Posterior vena cava (tissue), 2 donors: ENCODE measurements at regions of chr1 and their contacts with region 1.

Region 1: DNA sequence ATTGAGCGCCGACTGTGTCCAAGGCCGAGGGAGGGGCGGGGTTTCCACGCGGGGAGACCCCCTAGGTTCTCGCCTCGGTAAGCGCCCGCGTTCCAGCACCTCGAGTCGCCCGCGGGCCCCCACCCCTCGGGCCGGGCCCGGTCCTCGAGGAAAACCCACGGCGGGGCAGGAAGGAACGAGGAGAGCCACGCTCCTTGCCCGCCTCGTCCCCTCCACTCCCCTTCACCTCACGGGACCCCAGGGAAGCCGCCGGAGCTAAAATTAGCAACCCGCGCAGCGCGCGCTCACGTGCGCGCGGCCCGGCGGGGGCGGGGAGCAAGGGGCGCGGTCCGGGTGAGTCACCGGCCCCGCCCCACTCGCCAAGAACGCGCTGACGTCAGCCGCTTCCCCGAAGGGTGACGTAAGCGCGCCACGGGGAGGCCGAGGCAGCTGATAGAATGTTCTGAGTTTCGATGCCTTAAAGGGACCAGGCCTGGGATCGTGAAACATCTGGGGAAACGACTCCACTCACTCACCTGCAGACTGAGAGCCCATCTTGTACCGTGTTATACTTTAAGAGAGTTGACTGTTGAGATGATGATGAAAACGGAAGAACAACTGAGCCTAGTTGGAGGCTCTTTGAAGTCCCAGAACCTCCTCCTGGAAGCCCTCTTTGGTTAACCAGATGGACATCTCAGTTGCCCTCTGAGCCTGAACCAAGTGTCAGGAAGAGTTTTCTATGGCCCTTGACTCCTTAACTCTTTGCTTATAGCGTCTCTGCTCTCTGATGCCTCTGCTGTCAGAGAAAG is 49.7 kb upstream of the ATF3 start:
- DNase-seq: peak; percentile 98

Region 2: GRCh38 chr1:212482384-212483281 is 76.3 kb before region 1 on chr1:
- intact Hi-C with region 1: loop called (anchors 5 to 10 kb)
- DNase-seq: no peak

Region 3: DNA sequence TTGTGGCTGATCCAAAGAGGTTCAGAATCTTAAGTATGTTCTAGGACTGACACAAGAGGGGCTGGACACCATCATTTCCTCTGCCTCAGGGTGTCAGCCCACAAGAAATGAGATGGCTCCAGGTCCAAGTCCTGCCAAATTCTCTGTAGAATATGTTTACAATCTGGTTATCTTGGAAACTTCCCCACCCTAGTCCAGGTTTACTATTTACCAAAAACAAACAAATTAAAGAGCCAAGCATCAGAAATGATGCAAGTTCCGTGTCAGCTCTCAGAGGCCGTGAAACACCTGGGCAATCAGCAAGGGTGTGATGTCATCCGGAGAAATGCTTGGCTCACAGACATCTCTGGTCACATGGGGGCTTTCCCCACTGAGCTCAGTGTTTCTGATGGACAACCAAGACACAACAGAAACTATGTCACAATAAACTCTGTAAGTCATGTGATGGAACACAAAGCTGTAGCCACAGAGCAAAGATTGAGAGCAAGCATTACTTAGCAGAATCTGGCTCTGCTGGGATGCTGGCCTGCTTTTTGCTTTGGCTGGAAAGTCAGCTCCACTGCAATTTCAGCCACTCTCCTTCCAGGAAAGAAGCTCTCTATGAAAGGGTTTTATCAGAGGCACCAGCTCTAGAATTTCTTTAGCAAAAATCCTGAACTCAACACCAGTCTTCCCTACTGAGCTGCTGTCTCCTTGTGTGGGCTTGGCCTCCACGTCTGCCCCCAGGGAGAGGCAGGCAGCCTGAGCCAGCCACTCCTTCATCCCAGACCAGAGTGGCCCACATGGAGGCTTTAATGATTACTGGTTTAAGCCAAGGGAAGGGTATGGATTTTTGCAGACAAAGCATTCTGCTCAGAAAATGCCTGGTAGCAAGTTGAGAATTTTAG is 70.2 kb before region 1 on chr1:
- intact Hi-C with region 1: loop called (anchors 5 to 10 kb)
- DNase-seq: no peak

Region 4: DNA sequence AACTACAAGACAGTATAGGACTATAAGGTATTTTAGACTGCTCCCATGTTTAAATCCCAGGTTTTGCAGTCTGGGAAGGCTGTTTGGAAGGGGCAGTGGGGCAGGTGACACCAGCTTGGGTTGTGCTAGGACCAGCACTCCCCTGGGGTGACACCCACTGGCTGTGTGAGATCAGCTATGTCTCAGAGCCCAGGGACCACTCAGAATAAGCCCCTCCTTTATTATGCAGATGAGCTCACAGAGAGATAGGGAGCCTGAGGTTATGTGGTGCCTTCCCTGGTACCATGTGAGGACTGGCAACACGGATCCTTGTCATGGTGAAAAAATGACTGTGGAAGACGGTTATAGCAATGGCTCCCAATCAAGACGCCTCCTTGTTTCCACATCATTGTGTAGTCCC is 55.2 kb before region 1 on chr1:
- intact Hi-C with region 1: no loop called
- DNase-seq: no peak